ENCODE measurements at regions of chr11 and their contacts with region 1.

Region 1: GRCh38 chr11:62309991-62310390 is 11.1 kb upstream of the SCGB1D4 start:
- DNase-seq: no peak
- H3K4me3 Mint-ChIP-seq: no peak overlapping the region
- H3K27ac Mint-ChIP-seq: no peak overlapping the region
- H3K4me1 Mint-ChIP-seq: peaks cover 5% of the 10 kb centered on the region
- H3K27me3 Mint-ChIP-seq: peaks cover 50% of the 10 kb centered on the region

Region 2: DNA sequence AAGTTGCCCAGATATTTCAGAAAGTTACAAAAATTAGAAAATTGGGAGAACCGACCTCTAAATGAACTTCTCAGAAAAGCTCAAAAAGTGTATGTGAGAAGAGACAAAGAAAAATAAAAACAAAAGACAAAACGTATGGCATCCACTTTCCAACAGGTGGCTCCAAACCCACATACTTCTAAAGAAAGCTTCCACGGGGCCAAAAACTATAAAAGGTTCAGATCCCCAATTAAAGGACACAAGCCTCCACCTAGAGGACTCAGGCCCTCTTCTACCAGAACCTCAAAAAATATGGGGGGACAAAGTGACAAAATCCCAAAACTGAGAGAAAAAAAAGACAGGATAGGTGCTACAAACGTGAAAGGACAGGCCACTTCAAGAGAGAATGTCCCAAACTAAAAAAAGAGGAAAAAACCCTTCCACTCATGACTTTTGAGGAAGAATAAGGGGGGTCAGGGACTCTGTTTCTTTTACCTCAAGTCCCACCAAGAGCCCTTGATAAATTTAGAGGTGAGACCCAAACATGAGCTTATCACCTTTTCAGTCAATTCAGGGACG is 92.7 kb before region 1 on chr11:
- intact Hi-C with region 1: loop called (anchors 2 kb)
- DNase-seq: no peak
- H3K4me3 Mint-ChIP-seq: no peak overlapping the region
- H3K27ac Mint-ChIP-seq: no peak overlapping the region
- H3K4me1 Mint-ChIP-seq: no peaks in the 10 kb centered on the region
- H3K27me3 Mint-ChIP-seq: peaks cover 22% of the 10 kb centered on the region

Region 3: DNA sequence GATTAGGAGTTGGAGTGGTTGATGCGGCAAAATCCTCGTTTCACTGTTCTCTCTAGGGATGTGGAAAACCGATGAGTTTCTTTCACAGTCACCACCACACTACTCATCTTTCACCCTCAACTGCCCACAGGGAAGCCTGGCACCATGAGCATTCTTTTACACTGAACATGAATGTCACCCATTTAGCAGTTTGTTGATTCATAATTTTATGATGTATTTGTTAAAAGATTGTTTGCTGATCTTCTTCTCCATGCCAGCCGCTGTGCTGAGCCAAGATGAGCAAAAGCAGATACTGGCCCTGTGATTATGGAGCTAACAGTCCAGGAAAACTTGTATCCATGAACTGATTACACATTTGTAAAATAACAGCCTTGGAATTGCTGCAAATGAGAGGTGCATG is 71.8 kb before region 1 on chr11:
- intact Hi-C with region 1: loop called (anchors 5 kb)
- DNase-seq: no peak
- H3K4me3 Mint-ChIP-seq: no peak overlapping the region
- H3K27ac Mint-ChIP-seq: no peak overlapping the region
- H3K4me1 Mint-ChIP-seq: no peaks in the 10 kb centered on the region
- H3K27me3 Mint-ChIP-seq: peaks cover 22% of the 10 kb centered on the region